ENCODE measurements at regions of chr2 and their contacts with region 1.

Region 1: DNA sequence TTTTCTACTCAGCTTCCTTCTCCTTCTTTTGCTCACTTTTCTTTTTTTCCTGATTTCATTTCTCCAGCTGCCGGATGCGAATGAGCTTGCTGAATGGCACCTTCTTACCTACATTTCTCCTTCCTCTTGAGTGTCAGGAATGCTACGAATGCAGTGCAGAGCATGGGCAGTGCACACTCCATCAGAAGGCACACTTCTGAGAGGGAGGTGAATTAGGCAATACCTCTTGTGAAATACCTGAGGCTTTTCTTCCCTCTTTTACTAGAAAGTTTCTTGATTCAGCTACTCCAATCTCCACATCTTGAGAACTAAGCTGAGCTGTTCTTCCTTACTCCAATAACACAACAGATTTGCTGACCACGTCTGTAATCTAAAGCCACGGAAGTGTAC is 51.1 kb downstream of the PLEKHM3 start:
- DNase-seq: no peak
- ATAC-seq: no peak
- H3K4me3 ChIP-seq: no peak overlapping the region
- H3K27ac ChIP-seq: no peak overlapping the region
- H3K4me1 ChIP-seq: peaks cover 0 to 20% (median 8%) of the 10 kb centered on the region in 9 donors
- H3K27me3 ChIP-seq: no peaks in the 10 kb centered on the region
- CTCF ChIP-seq: no peak

Region 2: DNA sequence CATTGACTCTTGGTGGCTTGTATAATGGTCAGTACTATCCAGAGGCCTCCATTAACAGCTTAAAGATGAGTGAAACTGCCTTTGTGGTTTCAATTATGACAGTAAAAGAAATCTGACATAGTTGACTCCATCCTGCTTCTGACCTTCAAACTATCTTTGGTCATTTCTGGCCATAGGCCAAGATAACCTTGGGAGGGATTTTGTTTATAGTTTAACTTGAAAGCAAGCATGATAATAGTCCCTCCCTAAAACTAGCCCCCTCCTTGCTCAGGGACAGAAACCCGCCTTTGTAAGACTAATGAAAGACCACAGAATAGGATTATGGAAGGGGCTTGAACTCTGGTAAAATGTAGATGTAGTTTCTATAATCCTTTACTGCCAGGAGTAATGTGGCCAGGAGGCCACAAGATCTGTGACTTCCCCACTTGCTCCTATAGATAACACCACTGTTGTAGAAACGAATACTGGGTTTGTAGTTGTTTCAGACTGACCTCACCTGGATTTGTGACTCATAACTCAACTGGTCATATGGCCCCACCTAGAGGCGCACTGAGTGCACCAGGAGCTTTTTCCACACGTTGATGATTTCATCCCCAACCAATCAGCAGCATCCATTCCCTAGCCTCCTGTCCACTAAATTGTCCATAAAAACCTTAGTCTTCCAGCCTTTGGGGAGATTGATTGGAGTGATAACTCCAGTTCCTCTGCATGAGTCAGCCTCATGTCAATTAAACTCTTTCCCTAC is 59.7 kb after region 1 on chr2:
- intact Hi-C with region 1: loop called in 1 of 10 experiments (anchors 10 kb)
- DNase-seq: peak in 1 of 2 donors; percentile 32
- ATAC-seq: peak in 5 of 8 donors; percentile 39 to 81 (median 61)
- H3K4me3 ChIP-seq: no peak overlapping the region
- H3K27ac ChIP-seq: no peak overlapping the region
- H3K4me1 ChIP-seq: peaks cover 0 to 12% (median 5%) of the 10 kb centered on the region in 9 donors
- H3K27me3 ChIP-seq: no peaks in the 10 kb centered on the region
- CTCF ChIP-seq: peak in 8 of 9 donors; percentile 22 to 58 (median 42)

Region 3: GRCh38 chr2:208531361-208531760 is 557.1 kb after region 1 on chr2:
- intact Hi-C with region 1: no loop called
- DNase-seq: no peak
- ATAC-seq: no peak
- H3K4me3 ChIP-seq: no peak overlapping the region
- H3K27ac ChIP-seq: no peak overlapping the region
- H3K4me1 ChIP-seq: no peaks in the 10 kb centered on the region
- H3K27me3 ChIP-seq: no peaks in the 10 kb centered on the region
- CTCF ChIP-seq: no peak

Measured in heart right ventricle (tissue), 16 donors.